ENCODE measurements at regions of chr7 and their contacts with region 1.

Region 1: DNA sequence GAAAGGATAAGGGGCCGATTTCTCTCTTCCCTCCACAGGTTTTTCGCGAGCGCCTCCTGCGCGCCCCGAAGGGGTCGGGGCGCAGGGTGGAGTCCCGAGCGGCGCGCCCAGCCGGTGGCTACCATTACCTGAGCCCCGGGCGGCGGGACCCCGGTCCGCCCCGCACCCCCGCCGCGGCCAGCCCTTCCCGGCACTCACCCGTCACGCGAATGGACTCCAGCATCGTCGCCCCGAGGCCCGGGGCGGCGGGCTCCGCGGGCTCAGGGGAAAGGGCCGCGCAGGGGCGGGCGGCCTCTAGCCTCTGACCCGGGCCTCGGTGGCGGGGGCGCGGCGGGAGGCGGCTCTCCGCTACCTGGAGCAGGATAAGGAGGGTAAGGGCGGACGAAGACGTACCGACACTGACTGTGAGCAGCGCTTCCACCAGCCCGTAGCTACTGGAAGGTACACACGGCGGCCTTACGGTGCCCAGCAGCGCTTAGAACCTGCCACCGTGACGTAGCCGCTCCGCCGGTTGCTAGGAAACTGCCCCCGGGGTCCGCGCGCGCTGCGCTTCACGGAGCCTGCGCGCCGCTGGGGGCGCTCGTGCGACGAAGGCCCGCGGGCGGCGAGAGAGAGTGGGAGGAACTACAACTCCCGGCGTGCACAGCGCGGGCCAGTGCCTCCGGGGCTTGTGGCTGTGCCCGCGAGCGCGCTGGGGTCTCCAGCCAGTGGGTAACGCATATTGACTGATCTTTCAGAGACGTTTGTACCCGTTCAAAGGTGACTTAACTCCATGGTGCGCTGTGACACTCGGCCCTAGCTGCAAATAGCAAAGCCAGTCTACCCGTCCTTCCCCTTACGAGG is 22.7 kb upstream of the ANLN start:
- DNase-seq: peak; percentile 94
- ATAC-seq: peak; percentile 99
- H3K4me3 Mint-ChIP-seq: peak overlapping the region; percentile 86
- H3K27ac Mint-ChIP-seq: peak overlapping the region; percentile 66
- H3K4me1 Mint-ChIP-seq: peaks cover 4% of the 10 kb centered on the region
- H3K27me3 Mint-ChIP-seq: peaks cover 26% of the 10 kb centered on the region

Region 2: DNA sequence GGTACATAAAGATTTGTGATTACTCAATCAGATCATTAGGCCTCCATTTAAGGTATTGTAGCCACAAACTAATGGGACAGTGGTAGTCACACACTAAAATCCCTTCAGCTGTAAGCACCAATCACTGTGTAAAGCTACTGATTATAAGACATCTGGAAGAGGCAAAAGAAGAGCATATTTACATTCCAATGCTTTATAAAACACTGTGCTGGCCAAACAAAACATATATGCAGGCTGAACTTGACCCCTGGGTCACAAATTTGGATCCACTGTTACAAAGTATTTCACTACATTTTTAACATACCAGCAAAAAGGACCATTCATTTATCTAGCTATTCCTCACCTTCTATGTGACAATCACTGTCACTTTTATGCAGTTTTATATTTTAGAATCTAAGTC is 18.7 kb before region 1 on chr7:
- CTCF ChIA-PET with region 1: no interaction called
- DNase-seq: no peak
- ATAC-seq: no peak
- H3K4me3 Mint-ChIP-seq: no peak overlapping the region
- H3K27ac Mint-ChIP-seq: no peak overlapping the region
- H3K4me1 Mint-ChIP-seq: no peaks in the 10 kb centered on the region
- H3K27me3 Mint-ChIP-seq: peaks cover 5% of the 10 kb centered on the region

Region 3: DNA sequence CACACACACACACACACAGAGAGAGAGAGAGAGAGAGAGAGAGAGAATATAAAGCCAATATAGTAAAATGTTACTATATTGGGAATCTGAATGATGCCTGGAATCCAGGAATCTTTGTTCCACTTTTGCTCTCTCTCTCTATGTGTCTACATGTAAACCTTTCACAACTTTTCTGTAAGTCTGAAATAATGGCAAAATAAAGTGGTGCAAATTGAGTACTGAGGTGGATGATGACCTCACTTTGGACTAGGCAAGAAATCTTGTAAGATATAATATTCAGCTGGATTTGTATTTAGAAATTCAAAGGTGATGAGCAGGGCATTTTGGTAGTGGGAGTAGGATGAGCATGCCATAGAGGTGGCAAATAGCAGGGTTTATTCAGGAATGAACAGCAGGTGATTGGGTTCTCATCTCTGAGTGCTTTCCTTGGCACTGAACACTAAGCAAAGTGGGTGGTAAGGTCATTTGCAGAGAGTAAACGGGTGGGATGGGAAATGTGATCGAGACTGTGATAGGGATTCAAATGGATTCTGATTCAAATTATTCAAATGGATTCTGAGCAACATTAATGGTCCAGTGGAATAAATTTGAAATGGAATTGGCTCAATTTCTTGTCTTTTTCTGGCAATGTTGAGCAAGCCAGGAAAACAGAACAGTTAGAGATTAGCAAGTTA is 13.0 kb after region 1 on chr7:
- CTCF ChIA-PET with region 1: interaction called, 20 read pairs
- DNase-seq: no peak
- ATAC-seq: no peak
- H3K4me3 Mint-ChIP-seq: no peak overlapping the region
- H3K27ac Mint-ChIP-seq: no peak overlapping the region
- H3K4me1 Mint-ChIP-seq: peaks cover 8% of the 10 kb centered on the region
- H3K27me3 Mint-ChIP-seq: peaks cover 20% of the 10 kb centered on the region

Region 4: DNA sequence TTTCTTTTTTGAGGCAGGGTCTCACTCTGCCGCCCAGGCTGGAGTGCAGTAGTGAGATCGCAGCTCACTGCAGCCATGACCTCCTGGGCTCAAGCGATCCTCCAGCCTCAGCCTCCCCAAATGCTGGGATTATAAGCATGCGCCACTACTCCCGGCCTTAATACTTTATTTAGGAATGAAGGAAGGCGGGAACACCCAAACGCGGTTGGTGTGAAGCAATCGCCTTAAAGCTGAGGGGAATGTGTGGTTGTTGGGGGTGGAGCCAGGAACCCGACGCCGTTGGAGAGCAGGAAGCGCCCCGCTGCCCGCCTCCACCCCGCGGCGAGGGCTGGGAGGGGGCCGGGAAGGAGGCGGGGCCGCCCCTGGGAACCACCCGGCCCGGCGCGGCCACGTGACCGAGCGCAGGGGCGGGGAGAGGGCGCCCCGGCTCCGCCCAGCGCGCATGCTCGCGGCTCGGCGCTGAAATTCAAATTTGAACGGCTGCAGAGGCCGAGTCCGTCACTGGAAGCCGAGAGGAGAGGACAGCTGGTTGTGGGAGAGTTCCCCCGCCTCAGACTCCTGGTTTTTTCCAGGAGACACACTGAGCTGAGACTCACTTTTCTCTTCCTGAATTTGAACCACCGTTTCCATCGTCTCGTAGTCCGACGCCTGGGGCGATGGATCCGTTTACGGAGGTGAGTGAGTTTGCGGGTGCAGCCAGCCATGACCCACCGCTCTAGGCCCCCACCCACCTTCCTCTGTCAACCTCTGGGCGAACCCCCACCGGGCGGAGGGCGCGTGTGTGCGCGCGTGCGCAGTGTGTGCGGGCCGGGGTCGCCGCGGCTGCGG is 22.6 kb after region 1 on chr7 and contains the start of gene ANLN:
- CTCF ChIA-PET with region 1: interaction called, 52 read pairs
- DNase-seq: peak; percentile 89
- ATAC-seq: peak; percentile 86
- H3K4me3 Mint-ChIP-seq: peak within 1 kb of the TSS; percentile 98
- H3K27ac Mint-ChIP-seq: peak within 1 kb of the TSS; percentile 95
- H3K4me1 Mint-ChIP-seq: peaks cover 34% of the 10 kb centered on the region
- H3K27me3 Mint-ChIP-seq: no peaks in the 10 kb centered on the region
- total RNA-seq, gene ANLN: 75.2 to 98.8 TPM